ENCODE measurements at regions of chr6 and their contacts with region 1.

Region 1: DNA sequence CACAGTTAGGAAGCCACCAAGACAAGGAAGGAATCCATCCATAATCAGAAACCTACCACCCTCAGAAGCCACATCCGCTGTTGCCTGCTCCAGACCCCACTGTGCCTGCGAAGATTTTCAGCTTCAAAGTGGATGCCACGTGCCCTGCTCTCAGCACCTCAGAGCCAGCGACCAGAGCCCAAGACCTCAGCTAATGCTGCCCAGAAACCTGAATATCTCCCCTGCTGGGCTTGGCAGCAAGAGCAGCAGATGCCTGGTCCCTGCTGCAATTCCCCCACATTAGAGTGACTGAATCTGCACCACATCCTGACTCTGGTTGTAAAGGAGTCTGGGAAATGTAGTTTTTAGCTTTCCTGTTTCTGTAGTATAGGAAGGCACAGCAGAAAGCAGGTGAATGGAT is 10.7 kb upstream of the ULBP3 start:
- DNase-seq: no peak
- H3K4me3 ChIP-seq: no peak overlapping the region
- H3K27ac ChIP-seq: no peak overlapping the region
- H3K4me1 ChIP-seq: no peaks in the 10 kb centered on the region
- H3K27me3 ChIP-seq: peaks cover 11% of the 10 kb centered on the region; the same call in 1 of the 2 replicates
- CTCF ChIP-seq: no peak
- EP300 ChIP-seq: no peak
- RAD21 ChIP-seq: no peak

Region 2: DNA sequence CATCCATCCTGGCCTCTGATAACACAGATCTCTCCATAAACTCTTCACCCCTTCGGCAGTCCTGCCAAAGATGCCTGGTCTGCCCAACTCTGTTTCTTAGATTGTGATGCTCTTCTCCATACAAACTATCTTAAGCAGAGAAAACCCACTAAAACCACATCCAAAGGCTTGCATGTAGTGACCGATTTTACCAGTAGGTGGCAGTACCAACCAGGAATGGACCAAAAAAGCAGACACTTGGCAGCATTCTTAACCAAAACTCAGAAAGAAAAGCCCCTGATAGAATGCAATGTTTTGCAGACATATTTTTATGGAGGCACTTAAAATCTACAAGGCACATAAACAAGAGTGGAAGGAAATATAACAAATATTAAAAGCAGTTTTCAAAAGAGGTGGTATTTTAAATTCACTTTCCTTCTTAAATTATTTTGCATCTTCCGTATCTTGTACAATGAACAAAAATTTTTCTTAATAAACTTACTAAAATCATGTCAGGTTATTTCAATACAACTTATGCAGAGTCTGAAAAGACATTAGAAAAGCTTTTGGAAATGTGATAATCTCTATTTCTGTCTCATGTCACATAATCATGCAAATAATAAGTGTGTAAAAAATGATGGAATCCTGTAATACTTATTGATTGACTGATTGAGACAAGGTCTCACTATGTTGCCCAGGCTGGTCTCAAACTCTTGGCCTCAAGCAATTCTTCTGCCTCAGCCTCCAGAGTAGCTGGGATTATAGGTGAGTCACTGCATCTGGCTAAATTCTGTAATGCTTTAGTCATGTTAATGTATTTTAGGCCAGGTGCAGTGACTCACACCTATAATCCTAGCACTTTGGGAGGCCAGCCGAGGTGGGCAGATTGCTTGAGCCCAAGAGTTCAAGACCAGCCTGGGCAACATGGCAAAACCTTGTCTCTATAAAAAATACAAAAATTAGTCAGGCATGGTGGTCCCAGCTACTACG is 244.8 kb before region 1 on chr6:
- CTCF ChIA-PET with region 1: no interaction called
- POLR2A ChIA-PET with region 1: no interaction called
- DNase-seq: peak; percentile 62
- H3K4me3 ChIP-seq: peak overlapping the region in 1 of 2 experiments; percentile 9; a peak in 1 of 4 replicates
- H3K27ac ChIP-seq: no peak overlapping the region
- H3K4me1 ChIP-seq: peaks cover 0 to 3% of the 10 kb centered on the region in 2 experiments; a peak in 2 of 4 replicates
- H3K27me3 ChIP-seq: no peaks in the 10 kb centered on the region
- CTCF ChIP-seq: peak; percentile 90
- EP300 ChIP-seq: no peak
- RAD21 ChIP-seq: peak; percentile 93

Region 3: GRCh38 chr6:150091476-150091875 is 11.9 kb after region 1 on chr6:
- CTCF ChIA-PET with region 1: interaction called, 12 read pairs
- POLR2A ChIA-PET with region 1: no interaction called
- DNase-seq: no peak
- H3K4me3 ChIP-seq: no peak overlapping the region
- H3K27ac ChIP-seq: no peak overlapping the region
- H3K4me1 ChIP-seq: no peaks in the 10 kb centered on the region
- H3K27me3 ChIP-seq: peaks cover 51% of the 10 kb centered on the region; the same call in 1 of the 2 replicates
- CTCF ChIP-seq: no peak
- EP300 ChIP-seq: no peak
- RAD21 ChIP-seq: no peak

Region 4: GRCh38 chr6:150098155-150098554 is 18.6 kb after region 1 on chr6:
- CTCF ChIA-PET with region 1: interaction called, 12 read pairs
- POLR2A ChIA-PET with region 1: no interaction called
- DNase-seq: no peak
- H3K4me3 ChIP-seq: no peak overlapping the region
- H3K27ac ChIP-seq: no peak overlapping the region
- H3K4me1 ChIP-seq: no peaks in the 10 kb centered on the region
- H3K27me3 ChIP-seq: peaks cover 46% of the 10 kb centered on the region; the same call in 1 of the 2 replicates
- CTCF ChIP-seq: no peak
- EP300 ChIP-seq: no peak
- RAD21 ChIP-seq: no peak

Region 5: GRCh38 chr6:150395398-150396009 is 315.9 kb after region 1 on chr6:
- CTCF ChIA-PET with region 1: interaction called, 12 read pairs
- POLR2A ChIA-PET with region 1: no interaction called
- DNase-seq: peak; percentile 43
- H3K4me3 ChIP-seq: no peak overlapping the region; a peak in 1 of 4 replicates
- H3K27ac ChIP-seq: no peak overlapping the region
- H3K4me1 ChIP-seq: no peaks in the 10 kb centered on the region
- H3K27me3 ChIP-seq: peaks cover 23% of the 10 kb centered on the region; the same call in 1 of the 2 replicates
- CTCF ChIP-seq: peak; percentile 66
- EP300 ChIP-seq: no peak
- RAD21 ChIP-seq: peak; percentile 62

Measured in SK-N-SH (cell line).